Activated CD4-positive, alpha-beta T cell treated with anti-CD3 and anti-CD28 coated beads, Interleukin-2, amount 10 ng/mL, durations not matched to agents 24 days and 14 days (primary cell): ENCODE measurements at regions of chr6 and their contacts with region 1.

Region 1: DNA sequence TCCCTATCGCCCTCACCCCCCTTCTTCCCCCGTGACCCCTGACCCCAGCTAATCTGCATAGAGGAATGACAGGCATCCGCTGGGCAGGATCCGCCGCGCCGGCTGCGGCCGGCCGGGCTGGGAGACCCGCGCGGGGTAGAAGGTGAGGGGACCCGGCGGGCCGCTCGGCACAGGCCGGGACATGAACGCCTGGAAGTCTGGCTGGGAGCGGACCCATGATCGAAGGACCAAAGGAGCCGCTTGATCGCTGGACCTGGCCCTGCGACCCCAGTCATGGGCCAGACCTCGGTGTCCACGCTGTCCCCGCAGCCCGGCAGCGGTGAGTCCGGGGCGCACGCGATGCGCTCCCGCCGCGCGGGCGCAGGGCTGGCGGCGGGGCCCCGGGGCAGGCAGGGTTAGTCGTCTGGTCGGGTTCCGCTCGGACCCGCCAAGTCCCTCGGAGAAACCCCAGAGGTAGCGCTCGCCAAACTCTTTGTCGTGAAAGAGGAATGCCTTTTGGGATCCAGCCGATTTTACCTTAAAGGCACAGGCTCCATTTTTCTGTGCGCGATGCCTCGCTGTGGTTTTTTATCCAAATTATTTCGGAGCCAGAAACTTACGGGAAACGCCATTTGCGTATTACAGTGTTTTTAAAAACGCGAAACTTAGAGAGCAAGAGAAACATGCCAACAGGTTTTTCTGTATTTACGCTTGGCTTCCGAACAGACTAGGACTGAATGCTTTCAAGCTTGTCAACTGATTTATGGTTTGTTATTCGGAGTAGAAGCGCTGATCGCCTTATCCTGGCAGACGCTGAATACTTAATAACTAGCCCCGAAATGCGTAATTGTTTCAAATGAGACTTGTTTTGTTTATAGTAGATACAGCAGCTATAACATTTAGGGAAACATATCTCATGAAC is at the start of gene PHACTR2:
- DNase-seq: peak; percentile 79
- H3K4me3 Mint-ChIP-seq: peak within 1 kb of the TSS; percentile 84
- H3K27ac Mint-ChIP-seq: no peak within 1 kb of the TSS
- H3K4me1 Mint-ChIP-seq: peaks cover 14% of the 10 kb centered on the region
- H3K27me3 Mint-ChIP-seq: peaks cover 46% of the 10 kb centered on the region
- total RNA-seq, gene PHACTR2: 47.7 and 53.8 TPM in 2 replicates

Region 2: GRCh38 chr6:143575440-143575839 is 102.7 kb before region 1 on chr6:
- intact Hi-C with region 1: loop called (anchors 5 kb)
- DNase-seq: peak; percentile 88
- H3K4me3 Mint-ChIP-seq: no peak overlapping the region
- H3K27ac Mint-ChIP-seq: no peak overlapping the region
- H3K4me1 Mint-ChIP-seq: peaks cover 5% of the 10 kb centered on the region
- H3K27me3 Mint-ChIP-seq: no peaks in the 10 kb centered on the region

Region 3: GRCh38 chr6:143629104-143630080 is 48.7 kb before region 1 on chr6:
- intact Hi-C with region 1: loop called (anchors 5 kb)
- DNase-seq: no peak
- H3K4me3 Mint-ChIP-seq: peak overlapping the region; percentile 3
- H3K27ac Mint-ChIP-seq: peak overlapping the region; percentile 72
- H3K4me1 Mint-ChIP-seq: peaks cover 36% of the 10 kb centered on the region
- H3K27me3 Mint-ChIP-seq: no peaks in the 10 kb centered on the region

Region 4: GRCh38 chr6:143734641-143735063 is 56.5 kb after region 1 on chr6:
- intact Hi-C with region 1: loop called (anchors 5 kb)
- DNase-seq: no peak
- H3K4me3 Mint-ChIP-seq: no peak overlapping the region
- H3K27ac Mint-ChIP-seq: no peak overlapping the region
- H3K4me1 Mint-ChIP-seq: peaks cover 38% of the 10 kb centered on the region
- H3K27me3 Mint-ChIP-seq: no peaks in the 10 kb centered on the region

Region 5: DNA sequence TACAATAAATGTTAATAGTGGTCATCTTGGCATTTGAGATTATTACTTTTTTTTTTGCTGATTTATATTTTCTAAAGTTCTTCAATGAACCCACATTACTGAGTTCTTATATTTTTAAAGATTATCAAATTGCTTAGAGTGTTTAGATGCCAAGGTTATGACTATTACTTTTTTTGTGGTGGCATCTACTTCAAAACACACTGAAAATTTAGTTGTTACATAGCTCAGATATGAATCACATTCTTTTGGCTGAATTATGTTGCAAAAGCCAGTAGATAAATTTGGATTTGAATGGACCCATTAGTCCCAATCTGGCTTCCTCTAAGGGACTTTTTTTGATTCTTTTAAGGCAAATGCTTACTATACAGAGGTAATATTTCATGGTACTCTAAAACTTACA is 615.9 kb after region 1 on chr6:
- intact Hi-C with region 1: no loop called
- DNase-seq: no peak
- H3K4me3 Mint-ChIP-seq: no peak overlapping the region
- H3K27ac Mint-ChIP-seq: no peak overlapping the region
- H3K4me1 Mint-ChIP-seq: peaks cover 9% of the 10 kb centered on the region
- H3K27me3 Mint-ChIP-seq: peaks cover 11% of the 10 kb centered on the region

Region 6: DNA sequence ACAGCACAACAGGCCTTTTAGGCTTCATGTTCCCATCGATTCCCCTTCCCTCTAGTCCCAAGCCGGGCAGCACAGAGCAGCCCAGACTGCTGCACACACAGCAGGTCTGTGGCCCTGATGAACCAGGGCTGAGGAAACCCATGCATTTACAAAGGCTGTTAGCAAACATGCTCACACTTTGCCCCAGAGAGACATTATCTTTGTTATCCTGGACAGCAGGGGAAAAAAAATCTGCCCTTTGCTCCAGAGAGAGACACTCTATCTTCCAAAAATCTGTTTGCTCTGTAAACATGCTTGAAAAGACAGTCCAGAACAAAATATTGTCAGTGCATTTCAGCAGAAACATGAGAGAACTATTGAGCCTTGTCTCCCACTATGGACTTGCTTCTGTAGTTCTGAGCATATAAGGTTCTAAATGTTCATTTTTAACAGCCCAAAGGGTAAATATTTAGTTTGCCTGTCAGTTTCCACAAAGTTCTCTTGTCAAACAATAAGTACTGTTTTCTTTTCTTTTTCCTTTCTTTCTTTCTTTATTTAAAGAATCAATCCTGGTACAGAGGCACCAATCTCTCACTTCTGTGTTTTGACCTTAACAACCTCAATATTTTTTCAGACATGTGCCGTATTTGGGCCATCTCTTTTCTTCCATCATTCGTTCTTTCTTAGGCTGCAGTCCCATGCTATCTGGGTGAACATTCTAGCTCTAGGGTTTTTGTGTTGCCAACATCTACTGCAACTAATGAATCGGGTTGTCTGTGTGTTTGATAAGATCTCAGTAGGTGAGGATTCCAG is 1589.1 kb after region 1 on chr6:
- intact Hi-C with region 1: no loop called
- DNase-seq: no peak
- H3K4me3 Mint-ChIP-seq: no peak overlapping the region
- H3K27ac Mint-ChIP-seq: no peak overlapping the region
- H3K4me1 Mint-ChIP-seq: no peaks in the 10 kb centered on the region
- H3K27me3 Mint-ChIP-seq: no peaks in the 10 kb centered on the region